Naive thymus-derived CD4-positive, alpha-beta T cell (primary cell): ENCODE measurements at regions of chr4 and their contacts with region 1.

Region 1: GRCh38 chr4:86512631-86513030 is 81.5 kb upstream of the PTPN13 start:
- DNase-seq: no peak
- ATAC-seq: no peak
- H3K4me3 ChIP-seq: no peak overlapping the region
- H3K4me3 Mint-ChIP-seq: no peak overlapping the region
- H3K27ac ChIP-seq: no peak overlapping the region
- H3K27ac Mint-ChIP-seq: no peak overlapping the region
- H3K4me1 ChIP-seq: peaks cover 0 to 5% of the 10 kb centered on the region in 2 donors
- H3K4me1 Mint-ChIP-seq: no peaks in the 10 kb centered on the region
- H3K27me3 ChIP-seq: no peaks in the 10 kb centered on the region
- H3K27me3 Mint-ChIP-seq: peaks cover 0 to 53% (median 0%) of the 10 kb centered on the region in 5 donors

Region 2: GRCh38 chr4:86529436-86529835 is 16.8 kb after region 1 on chr4:
- CTCF ChIA-PET with region 1: no interaction called
- POLR2A ChIA-PET with region 1: no interaction called
- intact Hi-C with region 1: loop called in 1 of 2 experiments (anchors 2 kb)
- DNase-seq: no peak
- ATAC-seq: no peak
- H3K4me3 ChIP-seq: no peak overlapping the region
- H3K4me3 Mint-ChIP-seq: no peak overlapping the region
- H3K27ac ChIP-seq: no peak overlapping the region
- H3K27ac Mint-ChIP-seq: no peak overlapping the region
- H3K4me1 ChIP-seq: no peaks in the 10 kb centered on the region
- H3K4me1 Mint-ChIP-seq: no peaks in the 10 kb centered on the region
- H3K27me3 ChIP-seq: no peaks in the 10 kb centered on the region
- H3K27me3 Mint-ChIP-seq: peaks cover 2 to 34% (median 15%) of the 10 kb centered on the region in 5 donors